Activated naive CD4-positive, alpha-beta T cell treated with anti-CD3 and anti-CD28 coated beads for 36 hours (primary cell): ENCODE measurements at regions of chr17 and their contacts with region 1.

Region 1: GRCh38 chr17:31900877-31901276 is 631 bp downstream of the UTP6 start:
- DNase-seq: no peak
- H3K4me3 Mint-ChIP-seq: no peak overlapping the region
- H3K27ac Mint-ChIP-seq: no peak overlapping the region
- H3K4me1 Mint-ChIP-seq: peaks cover 33% of the 10 kb centered on the region
- H3K27me3 Mint-ChIP-seq: no peaks in the 10 kb centered on the region

Region 2: GRCh38 chr17:31494259-31495021 is 406.4 kb before region 1 on chr17:
- CTCF ChIA-PET with region 1: no interaction called
- intact Hi-C with region 1: loop called (anchors 1 kb)
- DNase-seq: peak; percentile 86
- H3K4me3 Mint-ChIP-seq: peak overlapping the region; percentile 64
- H3K27ac Mint-ChIP-seq: peak overlapping the region; percentile 96
- H3K4me1 Mint-ChIP-seq: peaks cover 89% of the 10 kb centered on the region
- H3K27me3 Mint-ChIP-seq: no peaks in the 10 kb centered on the region

Region 3: GRCh38 chr17:31680126-31680525 is 220.8 kb before region 1 on chr17:
- CTCF ChIA-PET with region 1: no interaction called
- intact Hi-C with region 1: loop called (anchors 1 kb)
- DNase-seq: peak; percentile 92
- H3K4me3 Mint-ChIP-seq: peak overlapping the region; percentile 44
- H3K27ac Mint-ChIP-seq: peak overlapping the region; percentile 76
- H3K4me1 Mint-ChIP-seq: peaks cover 13% of the 10 kb centered on the region
- H3K27me3 Mint-ChIP-seq: peaks cover 38% of the 10 kb centered on the region

Region 4: GRCh38 chr17:31820691-31821435 is 80.0 kb before region 1 on chr17:
- CTCF ChIA-PET with region 1: no interaction called
- intact Hi-C with region 1: no loop called
- DNase-seq: no peak
- H3K4me3 Mint-ChIP-seq: no peak overlapping the region
- H3K27ac Mint-ChIP-seq: no peak overlapping the region
- H3K4me1 Mint-ChIP-seq: no peaks in the 10 kb centered on the region
- H3K27me3 Mint-ChIP-seq: no peaks in the 10 kb centered on the region

Region 5: GRCh38 chr17:31877911-31878702 is 22.8 kb before region 1 on chr17:
- CTCF ChIA-PET with region 1: interaction called, 4 read pairs
- intact Hi-C with region 1: loop called (anchors 1 kb)
- DNase-seq: peak; percentile 60
- H3K4me3 Mint-ChIP-seq: no peak overlapping the region
- H3K27ac Mint-ChIP-seq: peak overlapping the region; percentile 92
- H3K4me1 Mint-ChIP-seq: peaks cover 21% of the 10 kb centered on the region
- H3K27me3 Mint-ChIP-seq: no peaks in the 10 kb centered on the region

Region 6: GRCh38 chr17:31931756-31932155 is 30.9 kb after region 1 on chr17:
- CTCF ChIA-PET with region 1: interaction called, 3 read pairs
- intact Hi-C with region 1: loop called (anchors 1 kb)
- DNase-seq: no peak
- H3K4me3 Mint-ChIP-seq: no peak overlapping the region
- H3K27ac Mint-ChIP-seq: no peak overlapping the region
- H3K4me1 Mint-ChIP-seq: peaks cover 7% of the 10 kb centered on the region
- H3K27me3 Mint-ChIP-seq: no peaks in the 10 kb centered on the region

Region 7: GRCh38 chr17:32123782-32124181 is 222.9 kb after region 1 on chr17:
- CTCF ChIA-PET with region 1: no interaction called
- intact Hi-C with region 1: no loop called
- DNase-seq: no peak
- H3K4me3 Mint-ChIP-seq: no peak overlapping the region
- H3K27ac Mint-ChIP-seq: no peak overlapping the region
- H3K4me1 Mint-ChIP-seq: peaks cover 12% of the 10 kb centered on the region
- H3K27me3 Mint-ChIP-seq: no peaks in the 10 kb centered on the region